IMR-90 (cell line): ENCODE measurements at regions of chr12 and their contacts with region 1.

Region 1: GRCh38 chr12:112347581-112347982 is 34.6 kb downstream of the HECTD4 start:
- DNase-seq: peak; percentile 99
- ATAC-seq: peak; percentile 91
- H3K4me3 ChIP-seq: no peak overlapping the region
- H3K27ac ChIP-seq: no peak overlapping the region
- H3K4me1 ChIP-seq: peaks cover 3% of the 10 kb centered on the region; the same call in 1 of the 2 replicates
- H3K27me3 ChIP-seq: no peaks in the 10 kb centered on the region
- CTCF ChIP-seq: no peak
- POLR2A ChIP-seq: no peak
- RAD21 ChIP-seq: no peak; the same call in 1 of the 2 replicates

Region 2: DNA sequence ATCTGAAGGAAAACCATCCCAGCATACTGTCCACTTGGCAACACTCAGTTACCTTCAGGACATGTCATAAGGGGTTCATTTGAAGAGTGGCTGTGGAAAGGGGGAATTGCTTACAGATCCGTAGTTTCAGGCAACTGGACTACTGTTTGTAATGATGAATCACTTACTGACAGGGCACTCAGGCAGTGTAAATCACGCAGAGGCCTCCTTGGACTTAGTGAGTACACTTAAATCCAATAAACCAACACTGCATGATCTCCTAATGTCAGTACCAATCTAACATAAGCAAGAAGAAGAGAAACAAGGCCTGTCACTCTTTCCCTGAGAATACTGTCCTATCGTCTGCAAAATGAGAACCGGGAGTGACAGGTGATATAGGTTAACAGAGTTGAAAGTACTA is 117.4 kb before region 1 on chr12:
- CTCF ChIA-PET with region 1: no interaction called
- POLR2A ChIA-PET with region 1: no interaction called
- dilution Hi-C with region 1: no loop called
- in situ Hi-C with region 1: no loop called
- intact Hi-C with region 1: no loop called
- DNase-seq: no peak
- ATAC-seq: no peak
- H3K4me3 ChIP-seq: no peak overlapping the region
- H3K27ac ChIP-seq: no peak overlapping the region
- H3K4me1 ChIP-seq: no peaks in the 10 kb centered on the region
- H3K27me3 ChIP-seq: no peaks in the 10 kb centered on the region
- CTCF ChIP-seq: no peak
- POLR2A ChIP-seq: no peak
- RAD21 ChIP-seq: no peak

Region 3: GRCh38 chr12:112303004-112303403 is 44.6 kb before region 1 on chr12:
- CTCF ChIA-PET with region 1: no interaction called
- POLR2A ChIA-PET with region 1: no interaction called
- dilution Hi-C with region 1: no loop called
- in situ Hi-C with region 1: no loop called
- intact Hi-C with region 1: loop called (anchors 2 kb)
- DNase-seq: peak; percentile 95
- ATAC-seq: peak; percentile 90
- H3K4me3 ChIP-seq: no peak overlapping the region
- H3K27ac ChIP-seq: no peak overlapping the region
- H3K4me1 ChIP-seq: peaks cover 7% of the 10 kb centered on the region
- H3K27me3 ChIP-seq: no peaks in the 10 kb centered on the region
- CTCF ChIP-seq: no peak
- POLR2A ChIP-seq: no peak
- RAD21 ChIP-seq: no peak

Region 4: DNA sequence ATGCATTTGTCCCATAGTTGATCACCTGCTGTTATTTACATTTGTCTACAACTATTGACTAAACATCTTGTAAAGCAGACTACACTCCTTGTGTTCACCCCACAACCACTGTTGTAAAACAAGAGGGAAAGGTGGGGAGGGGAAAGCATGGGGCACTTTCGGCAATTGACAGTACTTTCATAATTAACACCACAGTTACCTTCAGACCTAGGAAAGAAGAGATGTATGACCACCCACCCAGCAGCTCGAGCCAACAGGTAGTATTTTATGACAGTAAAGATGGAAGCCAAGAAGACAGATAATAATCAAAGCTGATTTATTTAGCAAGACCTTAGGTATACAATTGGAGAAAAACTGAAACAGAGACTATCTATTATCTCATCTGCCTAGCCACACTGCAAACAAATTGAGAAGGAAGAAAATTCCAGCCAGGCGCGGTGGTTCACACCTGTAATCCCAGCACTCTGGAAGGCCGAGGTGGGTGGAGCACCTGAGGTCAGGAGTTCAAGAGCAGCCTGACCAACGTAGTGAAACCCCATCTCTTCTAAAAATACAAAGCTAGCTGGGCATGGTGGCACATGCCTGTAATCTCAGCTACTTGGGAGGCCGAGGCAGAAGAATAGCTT is 23.4 kb after region 1 on chr12:
- CTCF ChIA-PET with region 1: interaction called, 10 read pairs
- POLR2A ChIA-PET with region 1: no interaction called
- dilution Hi-C with region 1: no loop called
- in situ Hi-C with region 1: no loop called
- intact Hi-C with region 1: no loop called
- DNase-seq: no peak
- ATAC-seq: no peak
- H3K4me3 ChIP-seq: no peak overlapping the region
- H3K27ac ChIP-seq: no peak overlapping the region
- H3K4me1 ChIP-seq: peaks cover 7% of the 10 kb centered on the region
- H3K27me3 ChIP-seq: no peaks in the 10 kb centered on the region
- CTCF ChIP-seq: no peak
- POLR2A ChIP-seq: no peak
- RAD21 ChIP-seq: no peak